Calu3 (cell line): ENCODE measurements at regions of chr21 and their contacts with region 1.

Region 1: GRCh38 chr21:46635324-46636172 is at the start of gene PRMT2:
- DNase-seq: peak; percentile 96
- H3K4me3 Mint-ChIP-seq: peak within 1 kb of the TSS; percentile 92
- H3K27ac Mint-ChIP-seq: peak within 1 kb of the TSS; percentile 86
- H3K4me1 Mint-ChIP-seq: peaks cover 20% of the 10 kb centered on the region
- H3K27me3 Mint-ChIP-seq: no peaks in the 10 kb centered on the region
- CTCF ChIP-seq: no peak
- total RNA-seq, gene PRMT2: 47.5 and 59.4 TPM in 2 replicates

Region 2: DNA sequence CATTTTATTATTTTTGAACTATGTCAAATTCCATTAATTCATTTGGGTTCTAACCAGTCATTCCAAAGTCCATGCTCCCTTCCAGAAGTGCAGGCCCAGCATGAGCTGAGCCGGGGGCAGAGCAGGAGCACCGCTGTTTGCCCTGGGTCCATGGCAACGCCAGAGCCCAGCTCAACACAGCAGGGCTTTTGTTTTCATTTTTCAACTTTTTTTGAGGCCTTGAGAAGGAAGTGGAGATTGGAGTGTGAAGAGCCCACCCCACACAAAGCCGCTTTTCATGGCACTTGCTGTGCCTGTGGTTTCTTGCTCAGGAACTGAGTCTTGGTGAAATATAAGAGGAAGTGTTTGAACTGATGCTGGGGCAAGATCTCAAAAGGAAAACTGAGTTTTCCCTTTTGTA is 13.3 kb before region 1 on chr21:
- CTCF ChIA-PET with region 1: interaction called, 17 read pairs
- intact Hi-C with region 1: no loop called
- DNase-seq: peak; percentile 75
- H3K4me3 Mint-ChIP-seq: no peak overlapping the region
- H3K27ac Mint-ChIP-seq: peak overlapping the region; percentile 80
- H3K4me1 Mint-ChIP-seq: peaks cover 11% of the 10 kb centered on the region
- H3K27me3 Mint-ChIP-seq: no peaks in the 10 kb centered on the region
- CTCF ChIP-seq: no peak